IMR-90 (cell line): ENCODE measurements at regions of chr19 and their contacts with region 1.

Region 1: GRCh38 chr19:10194500-10195289 is at the start of gene DNMT1:
- DNase-seq: peak; percentile 95
- ATAC-seq: peak; percentile 96
- H3K4me3 ChIP-seq: peak within 1 kb of the TSS; percentile 81
- H3K27ac ChIP-seq: peak within 1 kb of the TSS; percentile 89
- H3K4me1 ChIP-seq: peaks cover 8% of the 10 kb centered on the region
- H3K27me3 ChIP-seq: no peaks in the 10 kb centered on the region
- CTCF ChIP-seq: no peak
- POLR2A ChIP-seq: peak; percentile 80; the same call in 1 of the 2 replicates
- RAD21 ChIP-seq: no peak
- total RNA-seq, gene DNMT1: 26.2 and 40.3 TPM in 2 replicates

Region 2: GRCh38 chr19:10095948-10096621 is 98.6 kb before region 1 on chr19:
- CTCF ChIA-PET with region 1: no interaction called
- POLR2A ChIA-PET with region 1: no interaction called
- dilution Hi-C with region 1: no loop called
- in situ Hi-C with region 1: no loop called
- intact Hi-C with region 1: no loop called
- DNase-seq: peak; percentile 89
- ATAC-seq: peak; percentile 98
- H3K4me3 ChIP-seq: peak overlapping the region; percentile 55
- H3K27ac ChIP-seq: peak overlapping the region; percentile 79
- H3K4me1 ChIP-seq: peaks cover 4% of the 10 kb centered on the region
- H3K27me3 ChIP-seq: no peaks in the 10 kb centered on the region
- CTCF ChIP-seq: no peak
- POLR2A ChIP-seq: no peak
- RAD21 ChIP-seq: no peak

Region 3: DNA sequence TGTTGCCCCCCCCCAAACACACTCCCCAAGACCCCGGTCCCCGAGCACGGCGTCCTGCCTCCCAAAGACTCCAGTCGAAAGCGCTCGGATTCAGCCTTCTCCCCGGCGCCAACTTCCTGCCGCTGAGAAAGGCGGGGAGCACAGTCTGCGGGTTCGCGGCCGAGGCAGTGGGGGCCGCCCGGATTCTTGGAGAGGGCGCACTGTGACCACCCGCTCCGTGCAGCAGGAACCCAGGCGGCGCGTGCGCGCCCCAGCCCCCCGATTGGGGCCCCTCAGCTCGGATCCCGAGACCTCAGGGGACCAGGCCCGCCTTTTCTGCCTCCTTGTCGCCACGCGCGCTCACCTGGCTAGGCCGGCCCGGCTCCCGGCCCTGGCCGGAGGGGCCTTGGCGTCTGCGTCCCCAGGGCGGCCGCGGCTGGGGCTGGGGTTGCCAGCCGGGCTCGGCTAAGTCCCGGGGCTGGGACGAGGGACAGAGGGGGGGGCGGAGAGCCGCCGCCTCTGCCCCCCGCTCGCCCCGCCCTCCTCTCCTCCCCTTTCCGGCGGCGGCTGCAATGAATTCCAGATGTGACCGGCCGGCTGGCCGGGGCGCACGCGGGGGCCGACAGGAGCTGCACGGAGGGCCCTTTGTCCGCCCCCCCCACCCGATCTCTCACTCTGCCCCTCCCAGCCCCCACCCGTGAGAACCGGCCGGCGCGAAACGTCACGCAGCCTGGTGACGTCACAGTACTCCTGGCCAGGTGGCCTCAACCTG is 36.3 kb after region 1 on chr19 and contains the start of gene S1PR2:
- CTCF ChIA-PET with region 1: interaction called, 3 read pairs
- POLR2A ChIA-PET with region 1: no interaction called
- dilution Hi-C with region 1: no loop called
- in situ Hi-C with region 1: no loop called
- intact Hi-C with region 1: loop called (anchors 2 kb)
- DNase-seq: peak; percentile 75
- ATAC-seq: peak; percentile 69
- H3K4me3 ChIP-seq: peak within 1 kb of the TSS; percentile 87
- H3K27ac ChIP-seq: peak within 1 kb of the TSS; percentile 89
- H3K4me1 ChIP-seq: peaks cover 26% of the 10 kb centered on the region
- H3K27me3 ChIP-seq: no peaks in the 10 kb centered on the region
- CTCF ChIP-seq: no peak
- POLR2A ChIP-seq: peak; percentile 86
- RAD21 ChIP-seq: no peak; the same call in 1 of the 2 replicates
- total RNA-seq, gene S1PR2: 14.0 and 16.7 TPM in 2 replicates

Region 4: DNA sequence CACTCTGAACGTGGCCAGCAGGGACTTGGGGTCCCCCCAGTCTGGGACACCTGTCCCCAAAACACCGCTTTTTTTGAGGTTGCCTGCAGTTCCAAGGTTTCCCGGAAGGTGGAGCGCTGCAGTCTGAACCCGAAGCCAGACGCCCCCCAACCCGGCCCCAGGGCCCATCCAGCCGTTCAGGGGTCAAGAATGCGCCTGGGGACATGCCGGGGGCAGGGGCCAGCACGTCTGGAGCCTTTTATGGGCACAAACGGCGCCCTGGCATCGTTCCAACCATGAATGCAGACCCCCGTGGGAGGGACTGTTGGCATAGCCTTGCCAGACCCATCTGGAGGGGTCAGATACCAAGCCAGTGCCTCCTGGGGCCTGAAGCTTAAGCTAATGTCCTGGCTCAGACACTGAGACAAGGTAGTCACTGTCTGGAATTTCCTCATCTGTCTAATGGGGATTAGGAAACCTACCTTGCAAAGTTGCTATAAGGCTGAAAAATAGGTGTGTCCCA is 315.7 kb after region 1 on chr19:
- CTCF ChIA-PET with region 1: no interaction called
- POLR2A ChIA-PET with region 1: no interaction called
- dilution Hi-C with region 1: no loop called
- in situ Hi-C with region 1: no loop called
- intact Hi-C with region 1: no loop called
- DNase-seq: no peak
- ATAC-seq: peak; percentile 26
- H3K4me3 ChIP-seq: no peak overlapping the region
- H3K27ac ChIP-seq: no peak overlapping the region
- H3K4me1 ChIP-seq: no peaks in the 10 kb centered on the region; the same call in 1 of the 2 replicates
- H3K27me3 ChIP-seq: peaks cover 26% of the 10 kb centered on the region
- CTCF ChIP-seq: peak; percentile 47
- POLR2A ChIP-seq: no peak
- RAD21 ChIP-seq: 0 out of 2 replicates have a peak, but pooled peaks have one; percentile 10